ENCODE measurements at regions of chr3 and their contacts with region 1.

Region 1: DNA sequence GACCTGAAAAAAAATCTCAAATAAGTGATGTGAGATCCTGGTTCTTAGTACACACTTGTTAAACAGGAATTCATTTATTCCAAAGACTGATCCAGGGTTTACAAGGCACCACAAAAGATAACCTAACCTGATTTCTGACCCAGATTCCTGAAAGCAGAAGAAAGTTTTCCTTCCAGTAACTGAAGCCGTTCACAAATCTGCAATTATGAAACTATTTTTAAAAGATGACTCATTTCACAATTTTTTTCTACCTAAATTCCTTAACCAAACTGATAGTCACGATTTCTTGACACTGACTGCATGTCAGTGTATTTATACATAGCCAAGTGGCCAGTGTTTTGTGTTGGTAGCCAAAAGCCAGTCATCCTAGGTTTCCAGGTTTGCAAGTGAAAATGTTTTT is 17.1 kb downstream of the SLC9A9 start:
- DNase-seq: no peak
- H3K4me3 Mint-ChIP-seq: peak overlapping the region; percentile 38
- H3K27ac Mint-ChIP-seq: peak overlapping the region; percentile 19
- H3K4me1 Mint-ChIP-seq: peaks cover 27% of the 10 kb centered on the region
- H3K27me3 Mint-ChIP-seq: no peaks in the 10 kb centered on the region

Region 2: GRCh38 chr3:143001369-143002082 is 829.7 kb before region 1 on chr3 and contains the start of gene U2SURP:
- intact Hi-C with region 1: loop called (anchors 10 kb)
- DNase-seq: peak; percentile 97
- H3K4me3 Mint-ChIP-seq: peak within 1 kb of the TSS; percentile 96
- H3K27ac Mint-ChIP-seq: peak within 1 kb of the TSS; percentile 97
- H3K4me1 Mint-ChIP-seq: peaks cover 24% of the 10 kb centered on the region
- H3K27me3 Mint-ChIP-seq: peaks cover 8% of the 10 kb centered on the region
- total RNA-seq, gene U2SURP: 189 and 212 TPM in 2 replicates

Region 3: DNA sequence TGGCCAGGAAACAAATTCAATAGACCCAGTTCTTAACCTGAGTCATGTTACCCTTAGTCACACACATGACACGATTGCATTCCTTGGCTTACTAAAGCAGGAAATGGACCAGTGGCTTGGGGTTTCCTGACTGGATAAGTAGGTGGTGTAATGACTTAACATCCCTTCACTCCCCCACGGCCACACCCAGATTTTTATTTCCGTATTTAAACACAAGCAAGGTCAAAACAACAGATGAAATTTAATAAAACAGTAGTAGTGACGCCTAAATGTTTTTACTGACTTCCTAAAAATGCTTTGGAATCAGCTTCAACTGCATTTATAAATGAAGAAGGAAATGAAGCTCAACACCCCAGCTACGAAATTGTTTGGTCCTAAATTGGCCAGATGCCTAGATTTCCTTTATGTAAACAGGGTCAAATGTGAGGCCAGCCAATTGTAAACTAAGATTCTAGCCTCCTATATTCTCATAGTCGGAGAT is 387.3 kb before region 1 on chr3:
- intact Hi-C with region 1: loop called (anchors 10 kb)
- DNase-seq: peak; percentile 74
- H3K4me3 Mint-ChIP-seq: peak overlapping the region; percentile 9
- H3K27ac Mint-ChIP-seq: peak overlapping the region; percentile 23
- H3K4me1 Mint-ChIP-seq: peaks cover 30% of the 10 kb centered on the region
- H3K27me3 Mint-ChIP-seq: peaks cover 2% of the 10 kb centered on the region

Region 4: GRCh38 chr3:143814443-143814889 is 16.7 kb before region 1 on chr3:
- intact Hi-C with region 1: loop called (anchors 1 kb)
- DNase-seq: peak; percentile 66
- H3K4me3 Mint-ChIP-seq: peak overlapping the region; percentile 38
- H3K27ac Mint-ChIP-seq: peak overlapping the region; percentile 51
- H3K4me1 Mint-ChIP-seq: peaks cover 14% of the 10 kb centered on the region
- H3K27me3 Mint-ChIP-seq: no peaks in the 10 kb centered on the region

Region 5: GRCh38 chr3:143847787-143848631 is 16.8 kb after region 1 on chr3 and contains the start of gene SLC9A9:
- intact Hi-C with region 1: loop called (anchors 1 kb)
- DNase-seq: peak; percentile 77
- H3K4me3 Mint-ChIP-seq: peak within 1 kb of the TSS; percentile 92
- H3K27ac Mint-ChIP-seq: peak within 1 kb of the TSS; percentile 87
- H3K4me1 Mint-ChIP-seq: peaks cover 46% of the 10 kb centered on the region
- H3K27me3 Mint-ChIP-seq: peaks cover 6% of the 10 kb centered on the region
- total RNA-seq, gene SLC9A9: 1.1 and 1.3 TPM in 2 replicates

Measured in activated CD4-positive, alpha-beta T cell treated with anti-CD3 and anti-CD28 coated beads, Interleukin-2, amount 10 ng/mL, durations not matched to agents 24 days and 14 days (primary cell).